A673 (cell line): ENCODE measurements at regions of chr22 and their contacts with region 1.

Region 1: GRCh38 chr22:38338772-38339379 is 21.6 kb upstream of the CSNK1E start:
- DNase-seq: no peak
- H3K4me3 ChIP-seq: no peak overlapping the region
- H3K27ac ChIP-seq: no peak overlapping the region
- H3K4me1 ChIP-seq: peaks cover 5% of the 10 kb centered on the region
- H3K27me3 ChIP-seq: no peaks in the 10 kb centered on the region
- CTCF ChIP-seq: no peak

Region 2: DNA sequence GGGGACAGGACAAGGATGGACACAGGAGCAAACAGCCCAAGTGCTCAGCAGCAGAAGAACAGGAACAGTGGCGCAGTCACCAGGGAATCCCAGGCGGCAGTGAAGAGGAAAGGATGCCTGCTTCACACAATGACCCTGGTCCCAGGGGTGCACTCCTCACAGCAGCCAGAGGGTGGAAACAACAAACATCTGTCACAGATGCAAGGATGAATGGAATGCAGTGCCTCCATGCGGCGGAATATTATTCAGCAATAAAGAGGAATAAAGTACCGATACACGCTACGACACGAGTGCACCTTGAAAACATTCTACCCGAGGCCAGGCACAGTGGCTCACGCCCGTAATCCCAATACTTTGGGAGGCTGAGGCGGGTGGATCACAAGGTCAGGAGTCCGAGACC is 34.4 kb before region 1 on chr22:
- CTCF ChIA-PET with region 1: no interaction called
- POLR2A ChIA-PET with region 1: interaction called, 11 read pairs
- intact Hi-C with region 1: no loop called
- DNase-seq: peak; percentile 58
- H3K4me3 ChIP-seq: no peak overlapping the region
- H3K27ac ChIP-seq: peak overlapping the region; percentile 51
- H3K4me1 ChIP-seq: peaks cover 29% of the 10 kb centered on the region
- H3K27me3 ChIP-seq: no peaks in the 10 kb centered on the region
- CTCF ChIP-seq: no peak